Activated T-helper 1 cell treated with anti-CD3 and anti-CD28 coated beads, Interleukin-12 subunit alpha, Interleukin-12 subunit beta, Interleukin-2, Interleukin-4 antibody, amounts not matched to agents 30 ng/mL and 10 ng/mL and 1 ng/mL, durations not matched to agents 14 hours and 24 hours and 36 hours (primary cell): ENCODE measurements at regions of chr22 and their contacts with region 1.

Region 1: DNA sequence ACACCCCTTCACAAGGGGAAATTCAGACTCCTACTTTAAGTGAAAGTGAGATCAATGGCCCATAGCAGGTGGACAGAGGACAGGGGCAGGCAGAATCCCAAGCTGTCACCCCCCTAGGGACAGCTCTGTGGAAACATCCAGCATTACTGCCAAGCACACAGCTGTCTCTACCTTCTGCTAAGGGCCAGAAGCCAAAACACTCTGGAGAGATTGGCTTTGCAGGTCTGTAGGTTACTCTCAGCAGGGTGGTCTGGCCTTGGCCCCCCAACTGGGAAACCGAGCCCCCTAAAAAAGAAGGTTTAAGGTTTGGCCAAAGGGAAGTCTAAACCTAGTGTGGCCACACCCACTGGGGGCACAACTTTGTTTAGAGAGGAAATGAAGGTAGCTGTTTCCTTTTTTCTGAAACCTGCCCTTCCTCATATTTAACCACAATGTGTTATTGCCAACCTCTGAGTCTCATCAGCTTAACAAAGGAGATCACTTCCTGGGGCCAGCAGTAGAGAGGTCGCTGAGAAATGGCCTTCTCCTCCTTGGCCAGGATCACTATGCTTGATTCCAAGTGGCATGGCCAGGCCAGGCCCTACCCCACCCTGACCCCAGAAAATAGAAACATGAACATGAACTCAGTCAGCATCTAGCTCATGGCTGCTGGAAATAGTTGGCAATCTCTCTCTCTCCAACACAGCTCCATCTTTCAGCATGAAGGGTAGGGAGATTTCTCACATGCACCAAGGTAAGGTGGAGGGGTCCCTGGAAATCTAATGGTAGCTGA is 25.9 kb upstream of the SCARF2 start:
- DNase-seq: peak; percentile 7
- H3K4me3 Mint-ChIP-seq: peak overlapping the region; percentile 62
- H3K27ac Mint-ChIP-seq: peak overlapping the region; percentile 92
- H3K4me1 Mint-ChIP-seq: peaks cover 37% of the 10 kb centered on the region
- H3K27me3 Mint-ChIP-seq: no peaks in the 10 kb centered on the region

Region 2: GRCh38 chr22:20475115-20475436 is 11.6 kb after region 1 on chr22:
- intact Hi-C with region 1: loop called (anchors 1 kb)
- DNase-seq: no peak
- H3K4me3 Mint-ChIP-seq: peak overlapping the region; percentile 2
- H3K27ac Mint-ChIP-seq: peak overlapping the region; percentile 48
- H3K4me1 Mint-ChIP-seq: peaks cover 11% of the 10 kb centered on the region
- H3K27me3 Mint-ChIP-seq: no peaks in the 10 kb centered on the region

Region 3: DNA sequence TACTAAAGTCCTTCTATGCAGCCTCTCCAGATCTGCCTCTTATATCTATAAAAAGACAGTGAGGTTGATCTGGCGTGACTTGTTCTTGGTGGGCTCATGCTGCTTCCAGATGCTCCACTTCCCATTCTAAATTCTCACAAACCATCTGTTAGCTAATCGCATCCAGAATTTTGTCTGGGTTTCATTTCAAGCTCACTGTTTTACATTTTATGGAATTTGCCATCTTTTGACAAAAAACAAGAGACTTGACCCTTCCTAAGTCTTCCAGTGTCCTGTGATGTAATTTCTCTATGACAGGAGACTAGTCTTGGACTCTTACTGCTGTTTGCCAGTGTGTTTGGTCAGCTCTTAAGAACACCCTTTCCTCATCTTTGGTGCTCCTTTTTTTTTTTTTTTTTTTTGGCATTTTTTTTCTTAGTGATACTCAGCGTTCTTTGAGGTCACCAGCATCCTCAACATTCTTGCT is 476.7 kb after region 1 on chr22:
- intact Hi-C with region 1: no loop called
- DNase-seq: no peak
- H3K4me3 Mint-ChIP-seq: no peak overlapping the region
- H3K27ac Mint-ChIP-seq: no peak overlapping the region
- H3K4me1 Mint-ChIP-seq: peaks cover 65% of the 10 kb centered on the region
- H3K27me3 Mint-ChIP-seq: no peaks in the 10 kb centered on the region